ENCODE measurements at regions of chr5 and their contacts with region 1.

Region 1: GRCh38 chr5:140322751-140323731 is 20.1 kb upstream of the PFDN1 start:
- DNase-seq: peak in 2 of 3 donors; percentile 29 to 43
- H3K4me3 ChIP-seq: no peak overlapping the region
- H3K4me3 Mint-ChIP-seq: no peak overlapping the region
- H3K27ac ChIP-seq: peak overlapping the region in 1 of 2 donors; percentile 10
- H3K27ac Mint-ChIP-seq: peak overlapping the region; percentile 6 to 99 (median 96)
- H3K4me1 ChIP-seq: peaks cover 72 to 73% of the 10 kb centered on the region in 2 donors
- H3K4me1 Mint-ChIP-seq: peaks cover 81% of the 10 kb centered on the region
- H3K27me3 ChIP-seq: no peaks in the 10 kb centered on the region
- H3K27me3 Mint-ChIP-seq: peaks cover 0 to 5% (median 4%) of the 10 kb centered on the region in 3 donors
- CTCF ChIP-seq: no peak

Region 2: GRCh38 chr5:140261403-140262171 is 61.5 kb before region 1 on chr5:
- intact Hi-C with region 1: loop called in 1 of 2 experiments (anchors 5 kb)
- DNase-seq: peak; percentile 96 to 98 (median 97)
- H3K4me3 ChIP-seq: no peak overlapping the region
- H3K4me3 Mint-ChIP-seq: no peak overlapping the region
- H3K27ac ChIP-seq: peak overlapping the region; percentile 30 to 62
- H3K27ac Mint-ChIP-seq: peak overlapping the region; percentile 88 to 96 (median 93)
- H3K4me1 ChIP-seq: peaks cover 13 to 22% of the 10 kb centered on the region in 2 donors
- H3K4me1 Mint-ChIP-seq: peaks cover 40% of the 10 kb centered on the region
- H3K27me3 ChIP-seq: no peaks in the 10 kb centered on the region
- H3K27me3 Mint-ChIP-seq: peaks cover 0 to 3% (median 1%) of the 10 kb centered on the region in 3 donors
- CTCF ChIP-seq: no peak

Region 3: GRCh38 chr5:140273401-140273877 is 49.6 kb before region 1 on chr5:
- intact Hi-C with region 1: no loop called
- DNase-seq: peak; percentile 92 to 98 (median 96)
- H3K4me3 ChIP-seq: peak overlapping the region in 2 of 3 experiments; percentile 9 to 25
- H3K4me3 Mint-ChIP-seq: peak overlapping the region in 1 of 2 donors; percentile 59
- H3K27ac ChIP-seq: peak overlapping the region; percentile 77 to 94
- H3K27ac Mint-ChIP-seq: peak overlapping the region; percentile 96 to 99 (median 97)
- H3K4me1 ChIP-seq: peaks cover 36 to 46% of the 10 kb centered on the region in 2 donors
- H3K4me1 Mint-ChIP-seq: peaks cover 44% of the 10 kb centered on the region
- H3K27me3 ChIP-seq: no peaks in the 10 kb centered on the region
- H3K27me3 Mint-ChIP-seq: no peaks in the 10 kb centered on the region
- CTCF ChIP-seq: no peak

Region 4: GRCh38 chr5:140346348-140347101 is 23.5 kb after region 1 on chr5 and contains the start of gene HBEGF:
- intact Hi-C with region 1: loop called in 1 of 2 experiments (anchors 2 kb)
- DNase-seq: peak; percentile 70 to 79 (median 74)
- H3K4me3 ChIP-seq: peak within 1 kb of the TSS; percentile 52 to 99 (median 82)
- H3K4me3 Mint-ChIP-seq: peak within 1 kb of the TSS; percentile 94 to 100
- H3K27ac ChIP-seq: peak within 1 kb of the TSS in 1 of 2 donors; percentile 76
- H3K27ac Mint-ChIP-seq: peak within 1 kb of the TSS; percentile 54 to 95 (median 88)
- H3K4me1 ChIP-seq: peaks cover 57 to 65% of the 10 kb centered on the region in 2 donors
- H3K4me1 Mint-ChIP-seq: peaks cover 58% of the 10 kb centered on the region
- H3K27me3 ChIP-seq: no peaks in the 10 kb centered on the region
- H3K27me3 Mint-ChIP-seq: peaks cover 5 to 6% (median 5%) of the 10 kb centered on the region in 3 donors
- CTCF ChIP-seq: peak; percentile 55
- polyA plus RNA-seq, gene HBEGF: 25.2 to 548 (median 31.6) TPM

Region 5: DNA sequence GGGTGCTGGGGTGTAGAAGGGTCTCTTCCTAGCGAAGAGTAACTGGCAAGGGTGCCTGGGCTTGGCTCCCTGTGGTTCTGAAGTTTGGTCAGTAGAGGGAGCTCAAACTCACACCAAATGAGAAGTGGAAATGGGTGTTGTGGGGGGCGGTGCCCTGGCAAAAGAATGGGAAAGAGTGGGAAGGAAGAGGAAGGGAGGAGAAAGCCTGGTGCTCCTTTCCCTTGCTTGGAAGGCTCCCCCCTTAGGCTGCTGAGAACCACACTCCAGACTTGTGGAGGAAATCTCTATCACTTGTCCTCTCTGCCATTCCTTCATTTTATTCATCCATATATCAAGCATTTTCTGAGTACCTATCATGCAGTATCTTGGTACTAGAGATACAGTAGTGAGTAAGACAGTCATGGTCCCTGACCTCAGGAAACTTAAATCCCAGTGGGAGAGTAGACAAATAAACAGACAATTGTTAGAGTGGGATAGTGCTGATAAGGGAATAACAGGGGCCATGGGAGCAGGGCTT is 50.0 kb after region 1 on chr5:
- intact Hi-C with region 1: no loop called
- DNase-seq: peak; percentile 16 to 51 (median 38)
- H3K4me3 ChIP-seq: no peak overlapping the region
- H3K4me3 Mint-ChIP-seq: no peak overlapping the region
- H3K27ac ChIP-seq: no peak overlapping the region
- H3K27ac Mint-ChIP-seq: peak overlapping the region in 2 of 7 donors; percentile 41 to 54
- H3K4me1 ChIP-seq: peaks cover 0 to 6% of the 10 kb centered on the region in 2 donors
- H3K4me1 Mint-ChIP-seq: peaks cover 7% of the 10 kb centered on the region
- H3K27me3 ChIP-seq: no peaks in the 10 kb centered on the region
- H3K27me3 Mint-ChIP-seq: peaks cover 0 to 2% (median 2%) of the 10 kb centered on the region in 3 donors
- CTCF ChIP-seq: peak; percentile 91

Measured in CD14-positive monocyte (primary cell).